IMR-90 (cell line): ENCODE measurements at regions of chr4 and their contacts with region 1.

Region 1: GRCh38 chr4:145557720-145558119 is 61.5 kb upstream of the MMAA start:
- DNase-seq: peak; percentile 72
- ATAC-seq: peak; percentile 99
- H3K4me3 ChIP-seq: no peak overlapping the region
- H3K27ac ChIP-seq: no peak overlapping the region
- H3K4me1 ChIP-seq: no peaks in the 10 kb centered on the region
- H3K27me3 ChIP-seq: no peaks in the 10 kb centered on the region
- CTCF ChIP-seq: peak; percentile 99
- POLR2A ChIP-seq: no peak
- RAD21 ChIP-seq: peak; percentile 81

Region 2: GRCh38 chr4:145216535-145216934 is 341.2 kb before region 1 on chr4:
- CTCF ChIA-PET with region 1: interaction called, 5 read pairs
- POLR2A ChIA-PET with region 1: no interaction called
- dilution Hi-C with region 1: no loop called
- in situ Hi-C with region 1: no loop called
- intact Hi-C with region 1: loop called (anchors 1 kb)
- DNase-seq: peak; percentile 44
- ATAC-seq: no peak
- H3K4me3 ChIP-seq: no peak overlapping the region
- H3K27ac ChIP-seq: no peak overlapping the region
- H3K4me1 ChIP-seq: no peaks in the 10 kb centered on the region
- H3K27me3 ChIP-seq: peaks cover 3% of the 10 kb centered on the region; the same call in 1 of the 2 replicates
- CTCF ChIP-seq: peak; percentile 79
- POLR2A ChIP-seq: no peak
- RAD21 ChIP-seq: peak; percentile 84

Region 3: DNA sequence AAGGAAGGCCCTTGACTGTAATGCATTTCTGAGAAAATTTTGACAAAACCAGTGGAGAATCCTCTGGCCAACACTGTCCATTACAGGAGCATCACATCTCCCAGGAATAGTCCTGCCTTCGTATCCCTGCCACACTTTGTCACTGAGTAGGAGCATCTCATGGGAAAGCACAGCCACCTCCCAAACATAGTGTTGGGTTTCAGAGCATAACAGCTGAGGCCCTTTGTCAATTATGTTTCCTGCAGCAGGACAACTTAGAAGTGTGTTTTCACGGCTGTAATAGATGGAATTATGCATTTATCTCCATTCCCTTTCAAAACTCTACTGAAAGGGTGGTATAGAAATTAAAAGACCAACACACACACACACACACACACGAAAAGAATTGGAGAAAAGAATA is 167.1 kb before region 1 on chr4:
- CTCF ChIA-PET with region 1: no interaction called
- POLR2A ChIA-PET with region 1: no interaction called
- dilution Hi-C with region 1: no loop called
- in situ Hi-C with region 1: no loop called
- intact Hi-C with region 1: loop called (anchors 10 kb)
- DNase-seq: no peak
- ATAC-seq: no peak
- H3K4me3 ChIP-seq: no peak overlapping the region
- H3K27ac ChIP-seq: no peak overlapping the region
- H3K4me1 ChIP-seq: no peaks in the 10 kb centered on the region
- H3K27me3 ChIP-seq: no peaks in the 10 kb centered on the region; the same call in 1 of the 2 replicates
- CTCF ChIP-seq: no peak
- POLR2A ChIP-seq: no peak
- RAD21 ChIP-seq: no peak

Region 4: GRCh38 chr4:145709843-145710242 is 152.1 kb after region 1 on chr4:
- CTCF ChIA-PET with region 1: no interaction called
- POLR2A ChIA-PET with region 1: no interaction called
- dilution Hi-C with region 1: no loop called
- in situ Hi-C with region 1: no loop called
- intact Hi-C with region 1: no loop called
- DNase-seq: peak; percentile 98
- ATAC-seq: peak; percentile 94
- H3K4me3 ChIP-seq: no peak overlapping the region
- H3K27ac ChIP-seq: no peak overlapping the region
- H3K4me1 ChIP-seq: peaks cover 4% of the 10 kb centered on the region
- H3K27me3 ChIP-seq: no peaks in the 10 kb centered on the region
- CTCF ChIP-seq: no peak
- POLR2A ChIP-seq: no peak
- RAD21 ChIP-seq: peak; percentile 20; the same call in 1 of the 2 replicates